Transverse colon (tissue), 4 donors: ENCODE measurements at regions of chr11 and their contacts with region 1.

Region 1: GRCh38 chr11:68655406-68655805 is 28.9 kb upstream of the GAL start:
- DNase-seq: no peak
- H3K4me3 ChIP-seq: no peak overlapping the region
- H3K27ac ChIP-seq: no peak overlapping the region
- H3K4me1 ChIP-seq: no peaks in the 10 kb centered on the region
- H3K27me3 ChIP-seq: peaks cover 21% of the 10 kb centered on the region
- CTCF ChIP-seq: no peak
- EP300 ChIP-seq: no peak
- POLR2A ChIP-seq: no peak

Region 2: DNA sequence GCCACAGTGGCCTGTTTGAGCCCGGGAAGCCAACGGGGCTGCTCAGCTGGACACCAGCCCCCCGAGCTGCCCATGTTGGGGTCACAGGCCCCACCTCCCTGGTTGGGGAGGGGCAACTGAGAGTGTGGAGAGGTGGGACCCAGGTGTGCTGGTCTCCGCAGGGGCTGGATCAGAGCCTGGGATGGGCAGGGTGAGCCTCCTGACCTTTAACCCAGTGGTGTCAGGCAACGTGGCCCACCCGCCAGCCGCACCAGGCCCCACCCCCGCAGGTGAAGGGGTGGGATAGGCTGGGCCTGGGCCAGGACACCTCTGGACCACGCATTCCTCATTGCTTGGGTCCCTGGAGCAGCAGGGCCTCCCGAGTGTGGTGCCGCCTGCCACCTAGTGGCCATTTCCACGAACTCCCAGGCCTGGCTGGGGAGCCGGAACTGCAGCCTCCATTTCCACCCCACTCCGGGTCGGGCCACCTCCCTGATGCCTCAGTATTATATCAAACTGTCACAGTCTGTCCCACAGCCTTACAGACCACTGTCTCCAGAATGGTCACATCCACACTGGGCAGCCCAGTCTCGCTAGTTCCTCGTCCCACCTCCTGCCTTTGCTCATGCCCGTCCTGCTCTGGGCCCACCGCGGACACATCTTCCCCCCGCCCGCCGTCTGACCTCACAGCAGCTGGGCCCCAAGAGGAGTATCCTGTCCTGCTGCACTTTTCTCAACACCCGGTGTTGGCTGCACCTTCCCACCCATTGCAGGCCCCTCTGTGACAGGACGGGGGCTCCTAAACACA is 208.2 kb before region 1 on chr11:
- in situ Hi-C with region 1: no loop called
- intact Hi-C with region 1: no loop called
- DNase-seq: peak; percentile 83
- H3K4me3 ChIP-seq: no peak overlapping the region
- H3K27ac ChIP-seq: no peak overlapping the region
- H3K4me1 ChIP-seq: peaks cover 0 to 6% (median 1%) of the 10 kb centered on the region in 4 donors
- H3K27me3 ChIP-seq: no peaks in the 10 kb centered on the region
- CTCF ChIP-seq: peak; percentile 94 to 97 (median 95)
- EP300 ChIP-seq: no peak
- POLR2A ChIP-seq: no peak

Region 3: GRCh38 chr11:68621826-68622225 is 33.6 kb before region 1 on chr11:
- in situ Hi-C with region 1: no loop called
- intact Hi-C with region 1: loop called (anchors 1 kb)
- DNase-seq: no peak
- H3K4me3 ChIP-seq: no peak overlapping the region
- H3K27ac ChIP-seq: no peak overlapping the region
- H3K4me1 ChIP-seq: no peaks in the 10 kb centered on the region
- H3K27me3 ChIP-seq: peaks cover 5% of the 10 kb centered on the region
- CTCF ChIP-seq: no peak
- EP300 ChIP-seq: no peak
- POLR2A ChIP-seq: no peak